Ovary (tissue), 10 donors: ENCODE measurements at regions of chr9 and their contacts with region 1.

Region 1: GRCh38 chr9:76302947-76303940 is 91.0 kb downstream of the RFK start:
- DNase-seq: peak in 2 of 5 donors; percentile 13 to 33
- H3K4me3 ChIP-seq: no peak overlapping the region
- H3K27ac ChIP-seq: no peak overlapping the region
- H3K4me1 ChIP-seq: peaks cover 4% of the 10 kb centered on the region
- H3K27me3 ChIP-seq: no peaks in the 10 kb centered on the region
- CTCF ChIP-seq: peak; percentile 63 to 82 (median 81)
- EP300 ChIP-seq: no peak
- POLR2A ChIP-seq: no peak

Region 2: DNA sequence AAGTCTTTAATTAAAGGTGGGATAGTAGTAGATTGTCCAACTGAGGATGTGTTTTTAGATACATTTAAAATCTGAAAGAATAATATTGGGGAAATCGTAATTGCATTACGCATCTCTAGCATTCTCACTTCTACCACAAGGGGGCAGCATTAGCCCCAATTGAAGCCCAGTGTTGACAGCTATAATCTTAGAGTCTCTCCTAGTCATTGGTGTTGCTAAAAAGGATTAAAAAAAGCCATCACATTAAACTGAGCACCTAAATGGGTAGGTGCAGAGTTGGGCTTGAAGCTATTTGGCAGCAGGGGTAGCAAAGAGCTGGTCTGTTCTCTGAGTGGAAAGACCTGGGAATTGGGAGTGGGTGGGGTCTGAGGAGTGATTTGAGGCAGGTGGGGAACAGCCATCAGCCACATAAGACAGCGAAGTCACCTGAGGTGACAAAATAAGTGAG is 1037.7 kb before region 1 on chr9:
- intact Hi-C with region 1: loop called in 2 of 4 experiments (anchors 5 kb)
- DNase-seq: peak in 4 of 5 donors; percentile 22 to 60 (median 28)
- H3K4me3 ChIP-seq: no peak overlapping the region
- H3K27ac ChIP-seq: no peak overlapping the region
- H3K4me1 ChIP-seq: no peaks in the 10 kb centered on the region
- H3K27me3 ChIP-seq: no peaks in the 10 kb centered on the region
- CTCF ChIP-seq: peak; percentile 80 to 82 (median 81)
- EP300 ChIP-seq: no peak
- POLR2A ChIP-seq: no peak

Region 3: DNA sequence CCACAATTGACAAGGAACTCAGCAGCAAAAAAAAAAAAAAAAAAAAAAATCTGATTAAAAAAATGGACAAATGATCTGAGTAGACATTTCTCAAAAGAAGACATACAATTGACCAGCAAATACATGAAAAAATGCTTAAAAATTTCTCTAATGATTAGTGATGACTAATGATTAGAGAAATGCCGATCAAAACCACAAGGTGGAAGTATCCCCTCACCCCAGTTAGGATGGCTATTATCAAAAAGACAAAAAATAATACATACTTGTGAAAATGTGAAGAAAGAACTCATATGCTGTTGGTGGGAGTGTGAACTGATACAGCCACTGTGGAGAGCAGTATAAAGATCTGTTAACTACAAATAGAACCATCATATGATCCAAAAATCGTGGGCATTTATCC is 969.6 kb before region 1 on chr9:
- intact Hi-C with region 1: loop called in 1 of 4 experiments (anchors 10 kb)
- DNase-seq: no peak
- H3K4me3 ChIP-seq: no peak overlapping the region
- H3K27ac ChIP-seq: no peak overlapping the region
- H3K4me1 ChIP-seq: no peaks in the 10 kb centered on the region
- H3K27me3 ChIP-seq: no peaks in the 10 kb centered on the region
- CTCF ChIP-seq: peak in 2 of 3 donors; percentile 58 to 61
- EP300 ChIP-seq: no peak
- POLR2A ChIP-seq: no peak

Region 4: DNA sequence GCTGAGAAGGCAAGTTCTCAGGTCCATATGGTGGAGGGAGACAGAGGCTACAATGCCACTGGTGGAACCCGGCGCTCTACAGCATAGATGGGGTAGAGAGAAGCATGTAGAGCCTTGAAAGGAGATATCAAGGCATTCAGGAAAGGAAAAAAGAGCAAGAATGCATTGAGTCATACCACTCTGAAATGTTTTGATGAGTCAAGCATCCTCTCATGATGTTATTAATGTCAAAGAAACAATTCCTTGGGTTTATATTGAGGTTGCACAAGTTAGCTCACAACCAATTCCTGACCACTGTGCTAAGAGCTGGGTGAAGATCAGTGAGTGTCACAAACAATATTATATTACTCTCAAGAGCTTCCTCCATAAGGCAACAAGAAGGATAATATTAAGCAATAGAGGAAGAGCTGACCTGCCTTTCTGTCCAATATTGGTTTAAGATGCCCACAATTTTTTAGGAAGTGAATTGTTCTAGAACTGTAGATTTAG is 87.0 kb before region 1 on chr9:
- intact Hi-C with region 1: no loop called
- DNase-seq: no peak
- H3K4me3 ChIP-seq: no peak overlapping the region
- H3K27ac ChIP-seq: no peak overlapping the region
- H3K4me1 ChIP-seq: no peaks in the 10 kb centered on the region
- H3K27me3 ChIP-seq: no peaks in the 10 kb centered on the region
- CTCF ChIP-seq: no peak
- EP300 ChIP-seq: no peak
- POLR2A ChIP-seq: no peak